Heart right ventricle (tissue), 16 donors: ENCODE measurements at regions of chr17 and their contacts with region 1.

Region 1: DNA sequence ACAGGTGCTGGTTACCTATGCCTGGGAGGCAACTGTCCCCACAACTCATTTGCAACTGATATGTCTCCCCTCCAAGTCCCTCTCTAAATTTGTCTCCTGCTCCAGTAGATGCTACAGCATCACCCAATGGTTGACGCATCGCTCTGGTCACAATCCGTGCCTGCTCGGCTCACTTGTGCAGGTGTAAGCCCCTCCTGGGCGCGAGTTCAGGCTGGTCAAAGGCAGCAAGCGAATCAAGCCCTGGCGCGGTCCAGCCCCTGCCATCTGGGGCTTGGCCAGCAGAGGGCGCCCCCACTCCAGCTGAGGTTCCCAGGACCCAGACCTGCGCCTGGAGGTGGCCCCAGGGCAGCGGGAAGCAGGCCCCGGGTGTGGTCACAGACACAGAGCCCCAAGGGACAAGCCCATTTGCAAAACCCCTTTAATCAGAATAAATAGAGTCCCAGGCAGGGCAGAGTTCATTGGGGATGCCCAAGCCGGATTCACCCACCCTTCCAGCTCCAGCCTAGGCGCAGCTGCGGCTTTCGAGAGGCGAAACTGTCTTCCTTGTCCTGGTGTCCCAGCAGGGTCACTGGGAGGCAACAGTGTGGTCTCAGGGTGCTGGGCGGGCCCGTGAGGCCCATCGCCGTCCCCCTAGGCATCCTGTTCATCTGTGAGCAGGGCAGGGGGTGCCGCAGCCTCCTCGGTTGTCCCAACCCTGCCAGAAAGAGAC is 15.9 kb downstream of the TMC6 start:
- DNase-seq: peak; percentile 77 to 85
- ATAC-seq: peak; percentile 66 to 78 (median 70)
- H3K4me3 ChIP-seq: no peak overlapping the region
- H3K27ac ChIP-seq: peak overlapping the region in 8 of 10 donors; percentile 11 to 53 (median 29)
- H3K4me1 ChIP-seq: peaks cover 19 to 76% (median 31%) of the 10 kb centered on the region in 9 donors
- H3K27me3 ChIP-seq: no peaks in the 10 kb centered on the region
- CTCF ChIP-seq: peak; percentile 99 to 100 (median 100)

Region 2: GRCh38 chr17:78133971-78134898 is 21.6 kb after region 1 on chr17:
- intact Hi-C with region 1: loop called in 1 of 10 experiments (anchors 2 kb)
- DNase-seq: no peak
- ATAC-seq: peak in 6 of 8 donors; percentile 11 to 38 (median 31)
- H3K4me3 ChIP-seq: peak overlapping the region in 1 of 10 donors; percentile 97
- H3K27ac ChIP-seq: peak overlapping the region in 1 of 10 donors; percentile 62
- H3K4me1 ChIP-seq: peaks cover 0 to 77% (median 29%) of the 10 kb centered on the region in 9 donors
- H3K27me3 ChIP-seq: peaks cover 0 to 3% (median 0%) of the 10 kb centered on the region in 7 donors
- CTCF ChIP-seq: peak; percentile 25 to 71 (median 56)

Region 3: DNA sequence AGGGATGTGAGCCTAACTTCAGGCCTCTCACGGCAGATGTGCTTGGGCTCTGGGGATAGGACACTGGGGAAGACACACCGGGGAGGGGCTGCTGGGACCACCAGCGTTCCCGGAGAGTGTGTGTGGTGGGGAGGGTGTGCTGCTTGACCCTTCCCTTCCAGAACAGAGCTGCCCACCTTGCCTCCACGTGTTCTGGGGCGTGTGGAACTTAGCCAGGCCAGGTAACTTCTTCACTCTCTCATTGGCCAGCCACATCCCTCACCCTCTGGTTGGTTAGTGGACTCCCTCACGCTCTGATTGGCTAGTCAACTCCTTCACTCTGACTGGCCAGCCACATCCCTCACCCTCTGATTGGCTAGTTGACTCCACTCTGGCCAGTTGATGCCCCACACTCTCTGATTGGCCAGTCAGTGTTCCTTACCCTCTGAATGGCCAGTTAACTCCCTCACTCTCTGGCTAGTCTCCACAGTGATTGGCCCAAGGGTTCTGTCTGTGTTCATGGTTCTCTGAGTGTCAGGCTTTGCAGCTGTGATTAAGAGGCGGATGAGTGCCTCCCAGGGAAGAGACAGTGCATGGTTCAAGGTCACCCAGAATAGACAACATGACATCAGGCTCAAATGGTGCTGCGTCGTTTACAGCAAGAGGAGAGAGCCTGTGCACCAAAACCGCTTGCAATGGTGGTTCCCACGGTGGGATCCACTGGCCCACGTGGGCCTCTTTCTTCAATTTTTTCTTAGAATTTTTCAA is 128.8 kb after region 1 on chr17:
- intact Hi-C with region 1: loop called in 2 of 10 experiments (anchors 5 to 10 kb)
- DNase-seq: no peak
- ATAC-seq: peak in 7 of 8 donors; percentile 8 to 55 (median 38)
- H3K4me3 ChIP-seq: no peak overlapping the region
- H3K27ac ChIP-seq: no peak overlapping the region
- H3K4me1 ChIP-seq: no peaks in the 10 kb centered on the region
- H3K27me3 ChIP-seq: no peaks in the 10 kb centered on the region
- CTCF ChIP-seq: no peak